HEK293 (cell line): ENCODE measurements at regions of chr19 and their contacts with region 1.

Region 1: DNA sequence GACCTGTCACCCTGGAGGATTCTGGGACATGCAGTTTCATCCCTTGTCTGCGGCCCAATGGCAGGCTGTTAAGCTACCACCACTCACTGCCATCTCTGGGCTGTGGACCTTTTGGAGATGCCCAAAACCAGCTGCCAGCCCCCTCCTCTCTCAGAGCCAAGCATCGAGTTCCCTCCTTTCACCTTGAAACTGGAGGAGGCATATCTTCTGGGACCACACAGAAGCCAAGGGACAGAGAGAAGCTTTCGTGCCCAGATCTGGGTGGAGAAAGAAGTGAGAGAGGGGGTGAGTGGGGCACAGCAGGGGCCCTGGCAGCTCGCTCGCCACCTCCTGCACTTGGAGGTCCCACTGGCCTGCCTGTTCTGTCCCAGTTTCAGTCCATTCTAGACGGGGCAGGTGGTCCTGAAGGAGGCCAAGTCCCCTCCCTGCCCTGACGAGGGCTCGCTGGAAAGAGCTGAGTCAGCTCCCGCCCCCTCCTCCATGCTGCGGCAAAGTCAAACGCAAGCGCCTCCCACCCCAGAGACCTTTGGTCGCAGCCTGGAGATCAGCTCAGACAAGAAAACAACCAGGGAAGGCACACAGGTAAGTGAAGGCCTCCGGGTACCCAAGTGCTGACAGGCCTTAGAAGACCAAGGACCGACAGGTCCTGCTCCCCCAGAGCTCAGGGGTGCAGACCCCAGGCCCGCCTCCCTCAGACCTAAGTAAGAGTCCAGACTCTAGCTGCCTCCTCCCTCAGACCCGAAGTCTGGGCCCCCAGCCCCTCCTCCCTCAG is 3.8 kb downstream of the BCAT2 start:
- H3K4me3 ChIP-seq: no peak overlapping the region
- H3K27ac ChIP-seq: no peak overlapping the region
- H3K4me1 ChIP-seq: peaks cover 5% of the 10 kb centered on the region
- CTCF ChIP-seq: no peak

Region 2: DNA sequence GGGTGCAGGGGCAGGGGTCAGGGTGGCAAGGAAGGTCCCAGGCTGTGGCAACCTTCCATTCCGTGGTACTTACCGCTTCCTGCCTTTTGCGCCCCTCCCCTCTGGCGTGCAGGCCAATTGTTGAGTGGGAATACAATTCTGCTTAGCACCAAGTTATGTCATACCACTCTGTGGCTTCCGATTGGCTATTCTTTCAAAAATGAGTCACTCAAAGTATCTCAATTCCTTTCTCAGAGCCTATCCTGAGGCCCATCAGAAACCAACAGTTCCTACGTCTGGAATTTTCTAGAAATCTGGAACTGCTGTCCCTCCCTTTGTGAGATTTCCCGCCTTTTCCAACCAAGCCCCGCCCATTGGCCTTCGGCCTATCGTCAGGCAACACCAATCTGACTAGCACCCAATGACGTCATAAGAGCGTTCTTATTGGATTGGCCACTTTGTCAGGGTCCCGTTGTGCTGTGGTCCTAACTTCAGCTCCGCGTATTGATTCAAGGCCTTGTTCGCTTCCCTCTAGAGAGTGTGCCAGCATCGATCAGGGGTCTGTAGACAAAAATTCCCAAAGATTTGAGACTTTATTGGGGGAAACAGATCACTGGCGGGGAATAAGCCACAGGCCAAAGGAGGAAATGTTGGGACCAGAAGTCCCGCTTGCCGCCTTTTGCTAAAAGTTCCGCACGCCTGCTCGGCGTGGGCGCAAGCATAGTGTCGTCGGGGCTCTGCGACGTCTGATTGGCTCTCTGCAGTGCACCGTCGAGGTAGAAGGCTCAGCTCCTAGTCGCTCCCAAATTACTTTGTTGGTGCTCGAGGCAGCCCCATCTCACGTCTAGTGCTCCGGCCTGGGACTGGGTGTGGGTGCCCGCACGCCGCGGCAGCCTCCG is 145.9 kb before region 1 on chr19:
- CTCF ChIA-PET with region 1: no interaction called
- POLR2A ChIA-PET with region 1: no interaction called
- H3K4me3 ChIP-seq: no peak overlapping the region
- H3K27ac ChIP-seq: peak overlapping the region; percentile 17; the same call in 1 of the 2 replicates
- H3K4me1 ChIP-seq: peaks cover 3% of the 10 kb centered on the region
- CTCF ChIP-seq: no peak

Region 3: GRCh38 chr19:48826606-48827020 is 19.6 kb after region 1 on chr19:
- CTCF ChIA-PET with region 1: interaction called, 3 read pairs
- POLR2A ChIA-PET with region 1: interaction called, 10 read pairs
- H3K4me3 ChIP-seq: no peak overlapping the region
- H3K27ac ChIP-seq: no peak overlapping the region
- H3K4me1 ChIP-seq: no peaks in the 10 kb centered on the region
- CTCF ChIP-seq: no peak

Region 4: GRCh38 chr19:48970923-48971395 is 164.0 kb after region 1 on chr19:
- CTCF ChIA-PET with region 1: interaction called, 10 read pairs
- POLR2A ChIA-PET with region 1: no interaction called
- H3K4me3 ChIP-seq: no peak overlapping the region
- H3K27ac ChIP-seq: no peak overlapping the region
- H3K4me1 ChIP-seq: 0 out of 2 replicates have a peak, but pooled peaks cover 4% of the 10 kb centered on the region
- CTCF ChIP-seq: peak; percentile 91